Pancreas (tissue), 10 donors: ENCODE measurements at regions of chr10 and their contacts with region 1.

Region 1: GRCh38 chr10:49518982-49519578 is 19.8 kb downstream of the ERCC6 start:
- DNase-seq: peak in 1 of 6 donors; percentile 38
- ATAC-seq: peak; percentile 64 to 95 (median 89)
- H3K4me3 ChIP-seq: no peak overlapping the region
- H3K27ac ChIP-seq: no peak overlapping the region
- H3K4me1 ChIP-seq: no peaks in the 10 kb centered on the region
- H3K27me3 ChIP-seq: no peaks in the 10 kb centered on the region
- CTCF ChIP-seq: peak; percentile 20 to 60 (median 44)

Region 2: GRCh38 chr10:48976196-48976595 is 542.9 kb before region 1 on chr10:
- intact Hi-C with region 1: loop called in 1 of 3 experiments (anchors 10 kb)
- DNase-seq: no peak
- ATAC-seq: peak in 1 of 4 donors; percentile 32
- H3K4me3 ChIP-seq: no peak overlapping the region
- H3K27ac ChIP-seq: no peak overlapping the region
- H3K4me1 ChIP-seq: no peaks in the 10 kb centered on the region
- H3K27me3 ChIP-seq: no peaks in the 10 kb centered on the region
- CTCF ChIP-seq: no peak

Region 3: DNA sequence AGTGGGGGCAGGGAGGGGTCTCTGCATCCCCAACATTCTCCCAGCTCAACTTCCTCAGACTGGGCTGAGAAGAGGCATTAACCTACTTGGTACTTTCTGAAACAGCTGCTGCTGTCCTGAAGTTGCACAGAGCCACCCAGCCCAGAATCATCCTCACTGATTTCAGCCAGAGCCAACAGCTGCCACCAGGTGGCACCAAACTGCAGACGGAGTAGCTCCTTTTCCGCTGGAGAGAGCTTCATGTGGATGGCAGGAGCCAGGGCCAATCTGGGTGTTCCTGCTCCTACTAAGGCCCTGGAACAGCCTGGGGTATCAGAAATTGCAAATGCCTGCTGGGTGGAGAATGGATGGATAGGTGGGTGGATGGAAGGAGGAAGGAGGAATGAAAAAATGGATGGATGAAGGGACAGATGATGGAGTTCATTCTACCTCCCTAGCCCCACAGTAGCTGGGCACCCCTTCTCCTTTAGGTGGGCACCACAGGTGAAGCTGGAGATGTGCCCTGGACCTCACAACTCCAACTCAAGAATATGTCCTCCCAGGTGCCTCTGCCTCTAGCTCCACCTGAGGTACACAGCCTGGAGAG is 111.4 kb before region 1 on chr10:
- intact Hi-C with region 1: loop called (anchors 2 to 10 kb)
- DNase-seq: peak; percentile 71 to 95 (median 84)
- ATAC-seq: peak; percentile 53 to 80 (median 69)
- H3K4me3 ChIP-seq: no peak overlapping the region
- H3K27ac ChIP-seq: no peak overlapping the region
- H3K4me1 ChIP-seq: peaks cover 19 to 28% (median 21%) of the 10 kb centered on the region in 3 donors
- H3K27me3 ChIP-seq: no peaks in the 10 kb centered on the region
- CTCF ChIP-seq: peak; percentile 77 to 94 (median 90)

Region 4: GRCh38 chr10:49426592-49427360 is 92.3 kb before region 1 on chr10:
- intact Hi-C with region 1: no loop called
- DNase-seq: no peak
- ATAC-seq: no peak
- H3K4me3 ChIP-seq: no peak overlapping the region
- H3K27ac ChIP-seq: no peak overlapping the region
- H3K4me1 ChIP-seq: no peaks in the 10 kb centered on the region
- H3K27me3 ChIP-seq: no peaks in the 10 kb centered on the region
- CTCF ChIP-seq: no peak